ENCODE measurements at regions of chr9 and their contacts with region 1.

Region 1: GRCh38 chr9:130682490-130683121 is 11.0 kb upstream of the EXOSC2 start:
- DNase-seq: peak; percentile 85
- ATAC-seq: peak; percentile 63
- H3K4me3 ChIP-seq: peak overlapping the region; percentile 75
- H3K27ac ChIP-seq: no peak overlapping the region
- H3K4me1 ChIP-seq: peaks cover 8% of the 10 kb centered on the region; the same call in 1 of the 2 replicates
- H3K27me3 ChIP-seq: no peaks in the 10 kb centered on the region
- CTCF ChIP-seq: peak; percentile 70

Region 2: GRCh38 chr9:130107234-130107861 is 575.3 kb before region 1 on chr9:
- CTCF ChIA-PET with region 1: no interaction called
- POLR2A ChIA-PET with region 1: no interaction called
- intact Hi-C with region 1: loop called (anchors 2 kb)
- DNase-seq: peak; percentile 67
- ATAC-seq: peak; percentile 71
- H3K4me3 ChIP-seq: no peak overlapping the region
- H3K27ac ChIP-seq: no peak overlapping the region
- H3K4me1 ChIP-seq: no peaks in the 10 kb centered on the region
- H3K27me3 ChIP-seq: no peaks in the 10 kb centered on the region
- CTCF ChIP-seq: peak; percentile 81

Region 3: DNA sequence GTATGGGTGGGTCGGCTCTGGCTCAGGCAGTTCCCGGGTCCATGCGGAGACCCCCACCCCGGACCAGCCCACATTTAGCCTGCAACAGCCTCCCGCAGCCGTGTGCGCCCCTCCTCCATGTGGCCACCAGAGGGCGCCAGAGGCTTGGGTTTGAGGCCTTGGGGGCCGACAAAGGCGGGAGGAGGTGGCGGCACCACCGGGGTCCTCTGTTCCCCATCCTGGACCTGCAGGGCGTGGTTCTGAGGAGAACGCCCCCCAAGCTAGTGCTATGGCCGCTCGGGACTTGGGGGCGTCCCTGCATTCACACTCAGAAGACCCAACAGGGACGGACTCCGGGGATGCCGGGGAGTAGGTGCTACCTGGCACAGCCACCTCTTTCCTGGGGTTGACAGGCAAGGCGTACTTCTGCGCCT is 221.4 kb before region 1 on chr9:
- CTCF ChIA-PET with region 1: interaction called, 6 read pairs
- POLR2A ChIA-PET with region 1: no interaction called
- intact Hi-C with region 1: loop called (anchors 1 kb)
- DNase-seq: peak; percentile 60
- ATAC-seq: peak; percentile 59
- H3K4me3 ChIP-seq: no peak overlapping the region
- H3K27ac ChIP-seq: no peak overlapping the region
- H3K4me1 ChIP-seq: no peaks in the 10 kb centered on the region
- H3K27me3 ChIP-seq: no peaks in the 10 kb centered on the region
- CTCF ChIP-seq: peak; percentile 74